SK-N-SH (cell line): ENCODE measurements at regions of chr22 and their contacts with region 1.

Region 1: DNA sequence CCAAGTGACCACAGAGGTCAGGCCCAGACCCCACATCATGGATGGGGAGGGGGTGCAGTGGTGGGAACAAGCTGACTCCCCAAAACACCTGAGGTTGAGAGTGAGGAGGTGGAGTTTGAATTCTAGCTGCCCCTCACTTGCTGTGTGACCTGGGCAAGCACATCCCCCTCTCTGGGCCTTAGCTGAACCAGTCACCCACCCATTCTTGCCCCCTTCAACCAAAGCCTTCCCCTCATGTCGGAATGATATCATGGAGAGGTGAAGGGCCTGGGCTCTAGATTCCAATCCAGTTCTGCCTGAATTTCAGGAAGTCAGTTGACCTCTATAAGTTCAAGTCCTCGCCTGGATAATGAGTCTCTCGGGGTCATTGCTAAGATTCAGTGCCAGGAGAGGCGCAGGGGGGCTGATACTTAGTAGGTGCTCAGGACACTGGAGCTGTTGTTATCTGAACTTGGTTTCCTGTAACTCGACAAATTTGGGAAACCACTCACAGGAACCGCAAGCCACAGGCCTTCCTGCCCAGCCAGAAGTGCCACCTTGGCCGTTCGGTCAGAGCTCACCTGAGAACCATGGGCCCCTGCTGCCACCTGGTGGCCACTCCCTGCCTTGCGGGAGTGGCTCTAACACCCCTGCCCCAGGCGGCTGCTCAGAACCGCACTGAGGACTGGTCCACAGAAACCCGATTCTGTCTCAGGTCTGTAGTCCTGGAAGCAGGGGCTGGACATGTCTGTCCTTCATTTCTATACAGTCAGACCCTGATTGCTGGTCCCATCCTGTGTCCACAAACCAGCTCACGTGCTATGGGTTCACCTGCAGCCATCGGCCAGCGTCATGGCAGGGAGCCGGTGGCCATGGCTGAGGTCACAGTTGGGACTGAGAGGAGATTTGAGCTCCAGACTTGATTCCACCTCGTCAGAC is 6.9 kb downstream of the CDC42EP1 start:
- DNase-seq: peak; percentile 91
- H3K4me3 ChIP-seq: no peak overlapping the region; a peak in 1 of 4 replicates
- H3K27ac ChIP-seq: no peak overlapping the region
- H3K4me1 ChIP-seq: peaks cover 0 to 24% of the 10 kb centered on the region in 2 experiments; a peak in 3 of 4 replicates
- H3K27me3 ChIP-seq: no peaks in the 10 kb centered on the region
- CTCF ChIP-seq: peak; percentile 87
- EP300 ChIP-seq: no peak
- RAD21 ChIP-seq: peak; percentile 95

Region 2: DNA sequence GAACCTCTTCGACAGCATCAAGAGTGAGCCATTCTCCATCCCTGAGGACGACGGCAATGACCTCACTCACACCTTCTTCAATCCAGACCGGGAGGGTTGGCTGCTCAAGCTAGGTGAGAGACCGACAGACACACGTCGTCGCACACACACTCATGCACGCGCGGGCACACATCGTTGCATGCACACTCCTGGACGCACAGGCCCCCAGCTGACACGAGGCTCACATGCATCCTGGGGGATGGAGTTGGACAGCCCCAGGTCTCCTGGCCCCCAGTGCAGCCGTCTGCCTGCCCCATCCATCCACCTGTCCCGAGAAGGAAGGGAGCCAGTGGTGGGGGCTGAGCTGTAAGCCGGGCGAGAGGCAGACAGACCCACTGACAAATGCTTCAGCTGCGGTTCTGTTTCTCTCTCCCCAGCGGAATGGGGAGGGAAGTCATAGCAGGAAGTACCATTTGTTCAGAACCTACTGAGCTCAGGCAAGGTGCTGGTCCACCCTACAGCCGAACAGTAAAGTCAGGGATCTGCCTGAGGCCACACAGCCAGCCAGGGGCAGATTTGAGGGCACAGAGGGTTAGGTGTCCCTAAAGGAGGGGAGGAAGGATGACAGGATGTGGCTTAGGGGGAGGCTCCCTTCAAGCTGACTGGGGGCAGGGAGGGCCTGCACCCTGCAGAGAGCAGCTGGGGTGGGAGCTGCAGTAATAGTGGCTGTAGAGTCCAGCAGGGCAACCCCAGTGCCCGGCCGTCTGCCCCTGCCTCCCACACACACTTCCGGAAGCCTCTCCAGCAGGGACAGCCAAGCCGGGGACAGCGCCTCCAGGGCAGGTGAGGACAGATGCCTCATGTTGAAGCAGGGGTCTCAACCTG is 257.7 kb before region 1 on chr22:
- CTCF ChIA-PET with region 1: interaction called, 13 read pairs
- POLR2A ChIA-PET with region 1: no interaction called
- DNase-seq: peak; percentile 81
- H3K4me3 ChIP-seq: no peak overlapping the region
- H3K27ac ChIP-seq: peak overlapping the region in 1 of 2 experiments; percentile 48; a peak in 1 of 4 replicates
- H3K4me1 ChIP-seq: peaks cover 26 to 34% of the 10 kb centered on the region in 2 experiments; a peak in 3 of 4 replicates
- H3K27me3 ChIP-seq: no peaks in the 10 kb centered on the region
- CTCF ChIP-seq: no peak
- EP300 ChIP-seq: no peak
- RAD21 ChIP-seq: 0 out of 2 replicates have a peak, but pooled peaks have one; percentile 9

Region 3: DNA sequence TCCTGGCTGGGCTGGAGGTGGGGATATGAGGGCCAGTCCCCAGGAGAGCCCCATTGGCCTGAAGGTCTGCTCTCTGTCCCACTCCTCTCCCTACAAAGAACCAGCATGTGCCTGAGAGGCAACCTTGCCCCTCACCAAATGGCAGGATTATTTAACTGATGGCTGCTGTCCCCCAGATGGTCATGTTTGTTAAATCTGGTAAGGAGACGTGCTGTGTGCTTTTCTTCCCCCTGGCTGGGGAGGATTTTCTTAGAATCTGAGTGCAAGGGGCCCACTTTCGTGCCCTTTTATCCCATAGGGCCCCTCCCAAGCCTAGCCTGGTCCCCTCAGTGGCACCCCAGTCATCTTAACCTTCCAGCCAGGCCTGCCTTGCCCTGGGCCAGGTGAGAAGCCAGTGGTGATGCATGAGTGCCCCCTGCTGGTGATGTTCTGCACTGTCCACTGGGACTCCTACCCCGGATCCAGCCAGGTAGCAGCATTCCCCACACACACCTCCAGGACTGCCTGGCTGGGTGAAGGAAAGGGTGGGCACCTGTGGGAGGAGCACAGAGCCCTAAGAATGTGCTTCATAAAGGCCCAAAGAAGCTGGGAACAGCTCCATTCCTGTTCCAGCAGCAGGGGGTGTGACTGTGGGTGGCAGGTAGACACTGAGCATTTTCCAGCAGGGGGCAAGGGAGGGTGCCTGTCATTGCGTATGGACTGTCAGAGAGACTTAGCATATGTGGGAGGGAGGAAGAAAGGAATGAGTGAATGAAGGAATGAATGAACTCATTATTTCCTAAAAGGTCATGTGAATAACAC is 109.9 kb before region 1 on chr22:
- CTCF ChIA-PET with region 1: interaction called, 21 read pairs
- POLR2A ChIA-PET with region 1: no interaction called
- DNase-seq: peak; percentile 85
- H3K4me3 ChIP-seq: no peak overlapping the region; a peak in 1 of 4 replicates
- H3K27ac ChIP-seq: no peak overlapping the region
- H3K4me1 ChIP-seq: peaks cover 8 to 16% of the 10 kb centered on the region in 2 experiments; a peak in 2 of 4 replicates
- H3K27me3 ChIP-seq: no peaks in the 10 kb centered on the region
- CTCF ChIP-seq: peak; percentile 96
- EP300 ChIP-seq: no peak
- RAD21 ChIP-seq: peak; percentile 98

Region 4: DNA sequence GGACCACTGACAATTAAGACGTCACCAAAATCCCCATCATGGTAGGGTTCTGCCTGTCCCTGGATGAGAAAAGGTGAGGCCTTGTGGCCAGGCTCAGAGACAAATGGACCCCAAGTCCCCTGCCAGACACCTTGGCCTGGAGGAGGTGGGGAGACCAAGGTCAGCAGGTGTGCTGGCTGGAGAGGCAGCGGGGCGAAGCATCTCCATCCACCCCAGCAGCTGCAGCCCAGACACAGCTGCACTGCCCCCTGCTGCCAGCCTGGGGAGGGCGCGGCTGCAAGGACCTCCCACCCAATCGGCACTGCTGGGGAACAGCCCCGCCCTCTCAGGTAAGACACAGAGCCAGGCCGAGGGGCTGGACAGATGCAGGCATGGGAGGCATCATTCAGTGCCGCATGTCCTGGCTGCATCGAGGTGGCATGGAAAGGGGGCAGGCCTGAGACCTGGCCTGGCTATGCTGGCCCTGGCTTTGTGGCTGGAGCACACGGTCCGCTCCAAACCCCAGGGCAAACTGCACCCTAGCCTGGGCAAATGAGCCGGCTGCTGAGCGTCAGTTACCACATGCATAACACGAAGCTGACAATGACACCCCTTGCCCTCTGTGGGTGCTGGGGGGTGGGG is 68.8 kb before region 1 on chr22:
- CTCF ChIA-PET with region 1: interaction called, 19 read pairs
- POLR2A ChIA-PET with region 1: interaction called, 3 read pairs
- DNase-seq: peak; percentile 90
- H3K4me3 ChIP-seq: no peak overlapping the region
- H3K27ac ChIP-seq: no peak overlapping the region; a peak in 1 of 4 replicates
- H3K4me1 ChIP-seq: peaks cover 16 to 53% of the 10 kb centered on the region in 2 experiments
- H3K27me3 ChIP-seq: no peaks in the 10 kb centered on the region
- CTCF ChIP-seq: peak; percentile 40
- EP300 ChIP-seq: no peak
- RAD21 ChIP-seq: peak; percentile 54

Region 5: GRCh38 chr22:37529652-37530345 is 37.4 kb before region 1 on chr22:
- CTCF ChIA-PET with region 1: interaction called, 27 read pairs
- POLR2A ChIA-PET with region 1: no interaction called
- DNase-seq: peak; percentile 20
- H3K4me3 ChIP-seq: no peak overlapping the region
- H3K27ac ChIP-seq: no peak overlapping the region
- H3K4me1 ChIP-seq: peaks cover 3 to 10% of the 10 kb centered on the region in 2 experiments; a peak in 3 of 4 replicates
- H3K27me3 ChIP-seq: no peaks in the 10 kb centered on the region
- CTCF ChIP-seq: no peak
- EP300 ChIP-seq: no peak
- RAD21 ChIP-seq: no peak

Region 6: GRCh38 chr22:37588546-37589215 is 21.5 kb after region 1 on chr22:
- CTCF ChIA-PET with region 1: interaction called, 47 read pairs
- POLR2A ChIA-PET with region 1: no interaction called
- DNase-seq: no peak
- H3K4me3 ChIP-seq: no peak overlapping the region
- H3K27ac ChIP-seq: no peak overlapping the region
- H3K4me1 ChIP-seq: no peaks in the 10 kb centered on the region
- H3K27me3 ChIP-seq: no peaks in the 10 kb centered on the region
- CTCF ChIP-seq: no peak
- EP300 ChIP-seq: no peak
- RAD21 ChIP-seq: no peak

Region 7: DNA sequence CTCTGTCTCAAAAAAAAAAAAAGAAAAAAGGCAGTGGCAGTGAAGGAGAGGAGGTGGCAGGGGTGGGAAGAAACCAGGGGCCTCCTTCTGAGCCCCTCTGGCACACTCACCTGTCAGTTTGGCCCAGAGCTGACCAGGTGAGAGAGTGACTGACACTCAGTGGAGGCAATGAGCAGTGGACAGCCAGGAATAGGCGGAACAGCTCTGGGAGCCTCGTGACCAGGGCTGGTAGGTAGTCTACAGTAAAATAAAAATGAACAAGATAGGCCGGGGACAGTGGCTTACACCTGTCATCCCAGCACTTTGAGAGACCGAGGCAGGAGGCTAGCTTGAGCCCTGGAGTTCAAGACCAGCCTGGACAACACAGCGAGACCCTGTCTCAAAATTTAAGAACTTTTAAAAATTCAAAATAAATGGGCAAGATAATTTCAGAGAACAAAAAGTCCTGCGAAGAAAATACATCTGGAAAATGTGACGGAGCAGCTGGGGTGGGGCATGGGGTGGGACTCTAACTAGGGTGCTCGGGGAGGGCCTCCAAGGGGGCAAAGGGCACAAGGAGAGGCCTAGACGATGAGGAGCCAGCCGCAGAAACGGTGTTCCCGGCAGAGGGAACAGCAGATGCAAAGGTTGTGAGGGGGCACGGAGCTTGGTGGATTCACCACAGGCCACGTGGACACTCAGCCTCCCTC is 87.5 kb after region 1 on chr22:
- CTCF ChIA-PET with region 1: no interaction called
- POLR2A ChIA-PET with region 1: no interaction called
- DNase-seq: no peak
- H3K4me3 ChIP-seq: no peak overlapping the region
- H3K27ac ChIP-seq: no peak overlapping the region
- H3K4me1 ChIP-seq: peaks cover 4 to 13% of the 10 kb centered on the region in 2 experiments; a peak in 1 of 4 replicates
- H3K27me3 ChIP-seq: no peaks in the 10 kb centered on the region
- CTCF ChIP-seq: no peak
- EP300 ChIP-seq: no peak
- RAD21 ChIP-seq: no peak